Activated CD8-positive, alpha-beta T cell treated with anti-CD3 and anti-CD28 coated beads, Interleukin-2, amount 10 ng/mL, durations not matched to agents 7 days and 5 days (primary cell): ENCODE measurements at regions of chr14 and their contacts with region 1.

Region 1: GRCh38 chr14:50085570-50086320 is 30.6 kb downstream of the VCPKMT start:
- DNase-seq: peak; percentile 42
- ATAC-seq: no peak
- H3K4me3 Mint-ChIP-seq: peak overlapping the region; percentile 68
- H3K27ac Mint-ChIP-seq: peak overlapping the region; percentile 96
- H3K4me1 Mint-ChIP-seq: peaks cover 95% of the 10 kb centered on the region
- H3K27me3 Mint-ChIP-seq: no peaks in the 10 kb centered on the region

Region 2: GRCh38 chr14:49852301-49853157 is 233.2 kb before region 1 on chr14 and contains the start of gene NEMF:
- CTCF ChIA-PET with region 1: interaction called, 13 read pairs
- POLR2A ChIA-PET with region 1: interaction called, 6 read pairs
- DNase-seq: peak; percentile 91
- ATAC-seq: peak; percentile 84
- H3K4me3 Mint-ChIP-seq: peak within 1 kb of the TSS; percentile 97
- H3K27ac Mint-ChIP-seq: peak within 1 kb of the TSS; percentile 98
- H3K4me1 Mint-ChIP-seq: peaks cover 41% of the 10 kb centered on the region
- H3K27me3 Mint-ChIP-seq: no peaks in the 10 kb centered on the region
- total RNA-seq, gene NEMF: 75.6 to 78.9 TPM

Region 3: GRCh38 chr14:49879683-49880204 is 206.0 kb before region 1 on chr14:
- CTCF ChIA-PET with region 1: interaction called, 12 read pairs
- POLR2A ChIA-PET with region 1: no interaction called
- DNase-seq: peak; percentile 73
- ATAC-seq: peak; percentile 91
- H3K4me3 Mint-ChIP-seq: no peak overlapping the region
- H3K27ac Mint-ChIP-seq: peak overlapping the region; percentile 43
- H3K4me1 Mint-ChIP-seq: peaks cover 29% of the 10 kb centered on the region
- H3K27me3 Mint-ChIP-seq: peaks cover 2% of the 10 kb centered on the region

Region 4: GRCh38 chr14:49971156-49972130 is 114.3 kb before region 1 on chr14:
- CTCF ChIA-PET with region 1: interaction called, 5 read pairs
- POLR2A ChIA-PET with region 1: interaction called, 28 read pairs
- DNase-seq: peak; percentile 79
- ATAC-seq: peak; percentile 79
- H3K4me3 Mint-ChIP-seq: peak overlapping the region; percentile 70
- H3K27ac Mint-ChIP-seq: peak overlapping the region; percentile 96
- H3K4me1 Mint-ChIP-seq: peaks cover 65% of the 10 kb centered on the region
- H3K27me3 Mint-ChIP-seq: no peaks in the 10 kb centered on the region

Region 5: DNA sequence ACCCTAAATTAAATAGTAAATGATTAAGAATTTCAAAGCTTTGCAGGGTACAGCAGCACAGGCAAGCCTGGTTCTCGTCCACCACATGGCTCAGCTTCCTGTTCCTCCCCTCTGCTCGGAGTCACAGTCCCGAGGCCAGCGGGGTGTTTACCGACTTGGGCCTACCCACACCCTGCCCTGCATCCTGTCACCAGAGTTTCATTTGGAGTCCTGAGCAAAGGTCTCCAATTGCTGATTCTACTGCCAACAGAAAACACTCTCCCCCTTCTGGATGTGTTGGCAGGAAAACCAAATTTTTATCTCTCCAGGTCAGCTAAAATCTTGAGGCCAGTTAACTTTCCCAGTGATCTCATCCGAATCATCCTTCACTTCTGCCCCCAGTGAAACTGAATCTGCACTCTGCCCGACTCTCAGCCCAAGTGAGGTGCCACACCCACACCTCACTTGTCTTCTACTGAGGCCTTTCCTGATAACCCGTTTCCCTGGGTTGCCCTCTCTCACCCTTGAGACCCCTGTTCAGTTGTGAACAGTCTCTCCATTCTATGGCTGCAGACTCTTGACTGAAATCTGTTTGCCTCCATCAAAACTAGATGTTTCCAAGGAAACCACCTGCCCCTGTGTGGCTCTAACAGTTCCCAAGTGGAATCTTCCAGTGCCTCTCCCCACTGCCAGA is 40.6 kb before region 1 on chr14:
- CTCF ChIA-PET with region 1: interaction called, 7 read pairs
- POLR2A ChIA-PET with region 1: interaction called, 41 read pairs
- DNase-seq: peak; percentile 91
- ATAC-seq: peak; percentile 84
- H3K4me3 Mint-ChIP-seq: peak overlapping the region; percentile 13
- H3K27ac Mint-ChIP-seq: peak overlapping the region; percentile 89
- H3K4me1 Mint-ChIP-seq: peaks cover 75% of the 10 kb centered on the region
- H3K27me3 Mint-ChIP-seq: no peaks in the 10 kb centered on the region

Region 6: GRCh38 chr14:50067723-50068495 is 17.8 kb before region 1 on chr14:
- CTCF ChIA-PET with region 1: interaction called, 60 read pairs
- POLR2A ChIA-PET with region 1: interaction called, 151 read pairs
- DNase-seq: no peak
- ATAC-seq: no peak
- H3K4me3 Mint-ChIP-seq: no peak overlapping the region
- H3K27ac Mint-ChIP-seq: no peak overlapping the region
- H3K4me1 Mint-ChIP-seq: peaks cover 59% of the 10 kb centered on the region
- H3K27me3 Mint-ChIP-seq: no peaks in the 10 kb centered on the region

Region 7: GRCh38 chr14:50139192-50139591 is 53.4 kb after region 1 on chr14:
- CTCF ChIA-PET with region 1: no interaction called
- POLR2A ChIA-PET with region 1: no interaction called
- DNase-seq: no peak
- ATAC-seq: no peak
- H3K4me3 Mint-ChIP-seq: no peak overlapping the region
- H3K27ac Mint-ChIP-seq: no peak overlapping the region
- H3K4me1 Mint-ChIP-seq: no peaks in the 10 kb centered on the region
- H3K27me3 Mint-ChIP-seq: no peaks in the 10 kb centered on the region